Activated naive CD4-positive, alpha-beta T cell treated with anti-CD3 and anti-CD28 coated beads for 36 hours (primary cell): ENCODE measurements at regions of chr14 and their contacts with region 1.

Region 1: DNA sequence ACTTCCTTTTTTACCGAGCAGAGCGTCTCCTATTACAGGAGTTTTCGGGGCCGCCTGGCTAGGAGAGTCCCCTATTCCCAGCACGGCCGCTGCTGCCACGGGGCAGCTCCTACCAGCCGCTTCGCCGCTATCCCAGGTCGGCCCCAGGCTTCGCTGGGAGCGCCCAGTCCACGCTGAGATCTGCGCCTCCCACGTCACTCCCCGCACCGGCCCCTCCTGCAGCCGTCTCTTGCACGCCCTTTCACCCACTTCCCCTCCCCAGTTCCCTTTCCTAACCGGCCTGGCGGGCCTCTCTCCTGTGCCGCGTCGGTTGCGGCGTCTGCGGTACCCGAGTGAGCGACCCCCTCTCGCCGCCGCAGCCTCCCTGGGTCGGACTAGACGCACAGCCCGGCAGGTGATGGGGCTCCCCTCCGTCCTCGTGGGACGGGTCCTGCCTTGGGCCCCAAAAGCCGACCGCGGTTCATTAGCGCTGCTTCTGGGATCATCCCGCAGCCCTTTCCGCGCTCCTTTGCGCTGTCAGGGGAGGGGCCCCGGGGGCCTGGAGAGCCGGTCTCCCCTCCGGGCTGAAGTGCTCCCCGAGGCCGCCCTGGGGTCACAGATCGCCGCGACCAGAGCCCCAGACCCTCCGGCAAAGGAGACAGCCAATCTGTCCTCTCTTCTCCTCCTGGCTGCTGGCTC is 1318.4 kb downstream of the TMEM121 start:
- DNase-seq: peak; percentile 72
- H3K4me3 Mint-ChIP-seq: peak overlapping the region; percentile 86
- H3K27ac Mint-ChIP-seq: peak overlapping the region; percentile 76
- H3K4me1 Mint-ChIP-seq: peaks cover 26% of the 10 kb centered on the region
- H3K27me3 Mint-ChIP-seq: no peaks in the 10 kb centered on the region

Region 2: DNA sequence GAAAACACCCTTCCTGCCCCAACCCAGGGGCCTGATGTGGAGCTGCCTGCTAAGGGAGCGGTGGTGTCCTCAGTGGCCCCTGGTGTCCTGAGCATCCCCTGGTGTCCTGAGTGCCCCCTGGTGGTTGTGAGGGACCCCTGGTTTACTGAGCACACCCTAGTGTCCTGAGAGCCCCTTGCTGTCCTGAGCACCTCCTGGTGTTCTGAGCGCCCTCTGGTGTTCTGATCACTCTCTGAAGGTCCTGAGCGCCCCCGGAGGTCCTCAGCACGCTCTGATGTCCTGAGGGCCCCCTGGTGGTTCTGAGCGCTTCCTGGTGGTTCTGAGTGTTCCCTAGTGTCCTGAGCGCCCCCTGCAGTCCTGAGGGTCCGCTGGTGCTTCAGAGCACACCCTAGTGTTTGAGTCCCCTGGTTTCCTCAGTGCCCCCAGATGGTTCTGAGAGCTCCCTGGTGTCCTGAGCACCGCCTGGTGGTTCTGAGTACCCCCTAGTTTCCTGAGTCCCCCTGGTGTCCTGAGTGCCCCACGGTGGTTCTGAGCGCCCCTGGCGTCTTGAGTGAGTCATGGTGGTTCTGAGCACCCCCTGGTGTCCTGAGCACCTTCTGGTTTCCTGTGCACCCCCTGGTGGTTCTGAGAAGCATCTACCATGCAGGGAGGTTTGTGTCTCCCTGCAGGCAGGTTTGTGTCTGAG is 314.2 kb before region 1 on chr14:
- CTCF ChIA-PET with region 1: no interaction called
- intact Hi-C with region 1: no loop called
- DNase-seq: peak; percentile 53
- H3K4me3 Mint-ChIP-seq: no peak overlapping the region
- H3K27ac Mint-ChIP-seq: no peak overlapping the region
- H3K4me1 Mint-ChIP-seq: peaks cover 3% of the 10 kb centered on the region
- H3K27me3 Mint-ChIP-seq: peaks cover 16% of the 10 kb centered on the region

Region 3: GRCh38 chr14:106599209-106599608 is 245.5 kb before region 1 on chr14:
- CTCF ChIA-PET with region 1: no interaction called
- intact Hi-C with region 1: no loop called
- DNase-seq: no peak
- H3K4me3 Mint-ChIP-seq: no peak overlapping the region
- H3K27ac Mint-ChIP-seq: no peak overlapping the region
- H3K4me1 Mint-ChIP-seq: no peaks in the 10 kb centered on the region
- H3K27me3 Mint-ChIP-seq: peaks cover 48% of the 10 kb centered on the region

Region 4: GRCh38 chr14:106665814-106666213 is 178.9 kb before region 1 on chr14:
- CTCF ChIA-PET with region 1: interaction called, 5 read pairs
- intact Hi-C with region 1: loop called (anchors 5 kb)
- DNase-seq: no peak
- H3K4me3 Mint-ChIP-seq: no peak overlapping the region
- H3K27ac Mint-ChIP-seq: no peak overlapping the region
- H3K4me1 Mint-ChIP-seq: peaks cover 24% of the 10 kb centered on the region
- H3K27me3 Mint-ChIP-seq: peaks cover 5% of the 10 kb centered on the region

Region 5: DNA sequence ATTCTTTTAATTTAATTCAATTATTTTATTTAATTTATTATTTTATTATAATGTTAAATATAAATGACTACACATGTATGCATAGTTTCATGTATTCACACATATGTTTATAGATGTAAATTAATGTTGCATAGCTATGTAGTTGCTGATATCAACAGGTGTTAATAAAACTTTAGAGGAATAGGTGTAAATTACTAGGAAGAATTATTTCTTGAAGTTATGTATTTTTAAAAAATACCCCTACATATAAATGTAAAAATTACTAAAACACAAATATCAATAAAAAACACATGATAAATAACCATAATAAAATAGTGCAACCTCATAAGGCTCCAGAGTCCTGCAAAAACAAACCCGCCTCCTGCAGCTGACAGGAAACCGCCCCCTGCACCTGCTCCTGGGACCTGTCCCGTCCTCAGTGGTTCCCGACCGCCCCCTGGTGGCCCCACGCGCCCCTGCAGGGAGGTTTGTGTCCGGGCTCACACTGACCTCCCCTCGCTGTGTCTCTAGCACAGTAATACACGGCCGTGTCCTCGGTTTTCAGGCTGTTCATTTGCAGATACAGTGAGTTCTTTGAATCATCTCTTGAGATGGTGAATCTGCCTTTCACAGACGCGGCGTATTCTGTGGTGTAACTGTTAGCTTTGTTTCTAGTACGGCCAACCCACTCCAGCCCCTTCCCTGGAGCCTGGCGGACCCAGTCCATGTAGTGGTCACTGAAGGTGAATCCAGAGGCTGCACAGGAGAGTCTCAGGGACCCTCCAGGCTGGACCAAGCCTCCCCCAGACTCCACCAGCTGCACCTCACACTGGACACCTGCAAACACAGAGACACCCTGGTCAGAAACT is 54.3 kb before region 1 on chr14:
- CTCF ChIA-PET with region 1: interaction called, 7 read pairs
- intact Hi-C with region 1: loop called (anchors 5 kb)
- DNase-seq: peak; percentile 89
- H3K4me3 Mint-ChIP-seq: no peak overlapping the region
- H3K27ac Mint-ChIP-seq: no peak overlapping the region
- H3K4me1 Mint-ChIP-seq: peaks cover 10% of the 10 kb centered on the region
- H3K27me3 Mint-ChIP-seq: peaks cover 4% of the 10 kb centered on the region

Region 6: DNA sequence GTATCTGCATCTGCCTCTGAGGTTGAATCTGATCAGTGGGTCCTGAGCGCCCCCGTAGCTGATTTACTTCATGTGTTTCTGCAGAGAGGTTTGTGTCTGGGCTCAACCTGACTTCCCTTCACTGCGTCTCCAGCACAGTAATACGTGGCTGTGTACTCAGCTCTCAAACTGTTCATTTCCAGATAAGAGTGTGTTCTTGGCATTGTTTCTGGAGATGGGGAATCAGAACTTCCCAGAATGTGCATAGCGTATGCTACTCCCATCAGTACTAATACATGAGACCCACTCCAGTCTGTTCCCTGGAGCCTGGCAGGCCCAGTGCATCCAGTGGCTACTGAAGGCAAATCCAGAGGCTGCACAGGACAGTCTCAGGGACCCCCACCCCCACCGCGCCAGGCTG is 21.2 kb before region 1 on chr14:
- CTCF ChIA-PET with region 1: interaction called, 15 read pairs
- intact Hi-C with region 1: no loop called
- DNase-seq: no peak
- H3K4me3 Mint-ChIP-seq: no peak overlapping the region
- H3K27ac Mint-ChIP-seq: no peak overlapping the region
- H3K4me1 Mint-ChIP-seq: no peaks in the 10 kb centered on the region
- H3K27me3 Mint-ChIP-seq: peaks cover 6% of the 10 kb centered on the region